Gastrocnemius medialis (tissue), 4 donors: ENCODE measurements at regions of chr4 and their contacts with region 1.

Region 1: DNA sequence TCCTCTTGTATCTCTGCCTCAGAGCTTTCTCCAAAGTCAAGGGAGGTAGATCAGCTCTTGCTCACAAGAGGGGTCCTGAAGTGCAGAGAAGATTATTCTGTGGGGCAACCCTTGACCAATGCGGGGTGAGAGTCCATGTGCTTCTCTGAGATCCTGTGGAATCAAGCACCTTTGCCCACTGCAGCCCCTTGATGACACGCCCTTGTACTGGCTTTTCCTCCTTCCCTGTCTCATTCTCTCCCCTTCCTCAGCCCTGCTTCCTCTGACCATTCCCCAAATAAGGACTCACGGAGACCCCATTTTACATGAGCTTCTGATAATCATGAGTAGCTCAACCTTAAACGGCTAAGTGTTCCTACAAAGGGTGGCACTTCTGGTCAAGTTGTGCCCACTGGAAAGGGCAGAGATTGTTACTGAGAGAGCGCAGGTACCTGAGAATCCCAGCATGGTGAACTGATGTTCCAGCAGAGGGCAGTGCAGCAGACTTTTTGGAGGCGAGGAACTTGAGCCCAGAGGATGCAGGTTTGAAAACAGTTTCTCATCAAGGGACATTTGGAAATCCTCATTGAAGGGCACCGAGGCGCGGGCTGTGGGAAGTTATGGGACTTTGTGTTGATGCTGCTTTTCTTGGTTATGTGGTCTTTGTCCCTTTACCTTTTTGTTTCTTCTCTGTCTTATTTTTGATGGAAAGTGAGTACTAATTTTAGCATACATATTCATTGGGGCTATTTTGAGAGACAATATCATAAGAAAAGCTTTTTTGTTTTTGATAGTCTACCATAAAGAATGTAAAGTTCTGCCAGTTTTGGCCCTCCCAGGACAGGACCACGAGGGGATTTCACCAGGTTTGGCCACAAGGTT is 201.3 kb downstream of the RBM46 start:
- DNase-seq: peak in 1 of 2 donors; percentile 21
- ATAC-seq: no peak
- H3K4me3 ChIP-seq: no peak overlapping the region
- H3K27ac ChIP-seq: no peak overlapping the region
- H3K4me1 ChIP-seq: no peaks in the 10 kb centered on the region
- H3K27me3 ChIP-seq: no peaks in the 10 kb centered on the region
- CTCF ChIP-seq: peak in 1 of 5 experiments; percentile 19
- POLR2A ChIP-seq: no peak

Region 2: GRCh38 chr4:155234206-155234605 is 251.8 kb after region 1 on chr4:
- in situ Hi-C with region 1: no loop called
- intact Hi-C with region 1: no loop called
- DNase-seq: no peak
- ATAC-seq: no peak
- H3K4me3 ChIP-seq: no peak overlapping the region
- H3K27ac ChIP-seq: no peak overlapping the region
- H3K4me1 ChIP-seq: no peaks in the 10 kb centered on the region
- H3K27me3 ChIP-seq: no peaks in the 10 kb centered on the region
- CTCF ChIP-seq: no peak
- POLR2A ChIP-seq: no peak

Region 3: GRCh38 chr4:155353923-155354540 is 371.6 kb after region 1 on chr4:
- in situ Hi-C with region 1: loop called in 1 of 4 experiments (anchors 25 kb)
- intact Hi-C with region 1: no loop called
- DNase-seq: peak in 1 of 2 donors; percentile 15
- ATAC-seq: no peak
- H3K4me3 ChIP-seq: no peak overlapping the region
- H3K27ac ChIP-seq: no peak overlapping the region
- H3K4me1 ChIP-seq: no peaks in the 10 kb centered on the region
- H3K27me3 ChIP-seq: no peaks in the 10 kb centered on the region
- CTCF ChIP-seq: peak in 1 of 5 experiments; percentile 38
- POLR2A ChIP-seq: no peak